ENCODE measurements at regions of chr17 and their contacts with region 1.

Region 1: DNA sequence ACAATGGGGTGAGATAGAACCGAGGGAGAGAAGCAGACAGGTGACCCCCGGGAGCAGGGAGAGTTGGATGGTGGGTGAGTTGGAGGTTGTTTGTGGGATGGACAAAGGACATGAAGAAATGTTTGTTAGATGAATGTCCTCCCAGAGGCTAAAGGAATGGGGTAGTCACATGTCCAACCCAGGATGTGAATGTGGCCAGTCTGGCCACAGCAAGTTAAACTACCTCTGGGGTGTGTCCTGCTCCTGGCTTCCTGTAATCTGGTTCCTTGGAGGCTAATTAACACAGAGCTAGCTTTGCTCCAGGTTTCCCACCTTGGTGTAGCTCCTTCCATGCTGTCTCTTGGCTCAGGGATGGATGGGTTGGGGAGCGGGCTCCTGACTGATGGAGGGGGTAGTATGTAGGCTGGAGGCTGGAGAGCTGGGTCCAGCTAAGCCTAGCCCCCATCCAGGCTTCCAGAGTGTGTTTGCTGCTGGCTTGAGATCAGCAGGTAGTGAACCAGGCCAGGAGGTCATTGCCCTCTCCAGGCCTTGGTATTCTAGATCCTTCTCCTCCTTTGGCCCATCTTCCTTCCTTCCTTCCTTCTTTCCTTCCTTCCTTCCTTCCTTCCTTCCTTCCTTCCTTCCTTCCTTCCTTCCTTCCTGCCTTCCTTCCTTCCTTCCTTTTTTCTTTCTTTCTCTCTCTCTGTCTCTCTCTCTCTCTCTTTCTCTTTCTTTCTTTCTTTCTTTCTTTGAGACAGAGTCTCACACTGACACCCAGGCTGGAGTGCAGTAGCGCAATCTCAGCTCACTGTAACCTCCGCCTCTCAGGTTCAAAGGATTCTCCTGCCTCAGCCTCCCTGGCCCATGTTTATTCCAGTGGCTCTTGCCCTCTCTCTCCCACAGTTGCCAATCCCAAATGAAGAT is 28.0 kb upstream of the UBE2G1 start:
- DNase-seq: no peak
- ATAC-seq: no peak
- H3K4me3 Mint-ChIP-seq: peak overlapping the region; percentile 24
- H3K27ac Mint-ChIP-seq: peak overlapping the region; percentile 95
- H3K4me1 Mint-ChIP-seq: peaks cover 55% of the 10 kb centered on the region
- H3K27me3 Mint-ChIP-seq: no peaks in the 10 kb centered on the region
- CTCF ChIP-seq: no peak

Region 2: DNA sequence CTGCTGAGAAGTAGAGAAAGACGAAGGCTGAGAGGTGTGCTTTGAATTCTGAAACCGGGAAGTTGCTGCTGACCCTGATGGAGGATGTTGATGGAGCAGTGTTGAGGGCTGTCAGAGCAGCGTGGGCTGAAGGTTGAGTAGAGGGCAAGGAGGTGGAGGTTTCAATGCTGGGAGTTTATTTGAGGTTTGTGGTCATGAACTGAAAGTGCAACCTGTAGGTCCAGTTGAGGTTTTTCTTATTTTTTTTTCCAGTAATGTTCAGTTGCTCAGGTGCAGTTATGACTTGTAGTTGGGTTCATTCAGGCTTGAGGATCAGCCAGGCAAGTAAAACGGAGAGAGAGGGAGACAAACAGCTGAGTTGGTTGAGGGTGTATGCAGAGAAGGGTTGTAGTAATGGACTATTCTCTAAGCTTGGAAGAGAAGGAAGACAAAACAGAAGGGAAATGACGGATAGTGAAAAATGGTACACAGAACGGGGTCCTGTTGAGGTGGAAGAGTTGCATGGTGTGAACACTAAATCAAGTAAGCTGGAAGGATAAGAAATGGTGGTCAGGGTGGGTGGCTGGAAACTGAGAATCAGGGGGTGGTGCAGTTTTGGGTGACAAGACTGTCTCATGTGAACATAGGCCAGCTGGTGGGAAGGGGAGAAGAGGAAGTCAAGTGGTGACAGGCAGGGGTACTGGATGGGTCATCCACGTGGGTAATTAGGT is 19.3 kb before region 1 on chr17:
- CTCF ChIA-PET with region 1: no interaction called
- POLR2A ChIA-PET with region 1: interaction called, 14 read pairs
- intact Hi-C with region 1: loop called (anchors 1 kb)
- DNase-seq: no peak
- ATAC-seq: peak; percentile 88
- H3K4me3 Mint-ChIP-seq: peak overlapping the region; percentile 53
- H3K27ac Mint-ChIP-seq: peak overlapping the region; percentile 85
- H3K4me1 Mint-ChIP-seq: peaks cover 45% of the 10 kb centered on the region
- H3K27me3 Mint-ChIP-seq: no peaks in the 10 kb centered on the region
- CTCF ChIP-seq: no peak

Region 3: GRCh38 chr17:4407851-4408250 is 13.4 kb after region 1 on chr17:
- CTCF ChIA-PET with region 1: interaction called, 3 read pairs
- POLR2A ChIA-PET with region 1: interaction called, 16 read pairs
- intact Hi-C with region 1: loop called (anchors 1 kb)
- DNase-seq: no peak
- ATAC-seq: no peak
- H3K4me3 Mint-ChIP-seq: no peak overlapping the region
- H3K27ac Mint-ChIP-seq: no peak overlapping the region
- H3K4me1 Mint-ChIP-seq: peaks cover 10% of the 10 kb centered on the region
- H3K27me3 Mint-ChIP-seq: no peaks in the 10 kb centered on the region
- CTCF ChIP-seq: no peak

Measured in activated B cell treated with CpG ODN at 0.5 μM for 24 hours (primary cell).